ENCODE measurements at regions of chr12 and their contacts with region 1.

Region 1: DNA sequence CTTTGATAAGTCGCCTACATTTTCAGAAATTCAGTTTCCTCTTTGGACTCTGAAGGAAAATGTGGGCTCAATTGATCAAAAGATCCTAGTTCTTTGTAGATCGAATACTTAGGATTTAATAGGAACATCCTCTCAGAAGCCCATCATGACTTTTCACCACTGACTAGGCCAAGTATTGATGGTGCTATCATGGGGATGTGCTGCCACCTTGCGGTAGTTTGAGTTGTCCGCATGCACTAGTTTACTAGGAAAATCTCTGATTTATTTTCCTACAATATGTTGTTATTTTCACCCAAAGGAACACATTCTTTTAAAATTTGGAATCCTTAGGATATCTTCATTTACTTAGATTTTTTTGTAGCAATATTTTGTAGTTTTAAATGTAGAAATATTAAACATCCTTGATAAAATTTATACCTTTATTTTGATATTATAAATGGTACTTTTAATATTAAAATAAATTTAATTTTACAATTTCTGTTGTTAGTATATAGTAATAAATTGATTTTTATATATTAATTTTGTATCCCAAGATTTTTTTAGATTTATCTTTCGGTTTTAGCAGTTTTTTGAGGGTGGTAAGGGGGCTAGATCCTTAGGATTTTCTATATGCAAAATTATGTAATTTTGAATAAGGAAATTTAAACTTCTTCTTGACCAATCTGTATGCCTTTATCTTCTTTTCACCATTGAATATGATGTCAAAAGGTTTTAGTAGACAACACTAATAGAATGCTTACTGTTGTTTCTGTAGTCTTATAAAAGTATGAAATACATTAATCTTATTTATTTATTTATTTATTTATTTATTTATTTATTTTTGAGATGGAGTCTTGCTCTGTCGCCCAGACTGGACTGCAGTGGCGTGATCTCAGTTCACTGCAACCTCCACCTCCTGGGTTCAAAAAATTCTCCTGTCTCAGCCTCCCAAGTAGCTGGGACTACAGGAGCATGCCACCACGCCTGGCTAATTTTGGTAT is 52.9 kb upstream of the OR9K2 start:
- DNase-seq: peak; percentile 58 to 69 (median 65)
- ATAC-seq: peak in 3 of 4 donors; percentile 55 to 69 (median 64)
- H3K4me3 ChIP-seq: no peak overlapping the region
- H3K27ac ChIP-seq: no peak overlapping the region
- H3K4me1 ChIP-seq: no peaks in the 10 kb centered on the region
- H3K27me3 ChIP-seq: peaks cover 0 to 28% (median 0%) of the 10 kb centered on the region in 9 donors
- CTCF ChIP-seq: peak; percentile 67 to 93 (median 84)
- POLR2A ChIP-seq: no peak

Region 2: GRCh38 chr12:54701940-54702592 is 371.3 kb before region 1 on chr12:
- intact Hi-C with region 1: loop called in 3 of 10 experiments (anchors 5 to 10 kb)
- DNase-seq: no peak
- ATAC-seq: no peak
- H3K4me3 ChIP-seq: no peak overlapping the region
- H3K27ac ChIP-seq: no peak overlapping the region
- H3K4me1 ChIP-seq: no peaks in the 10 kb centered on the region
- H3K27me3 ChIP-seq: peaks cover 0 to 4% (median 0%) of the 10 kb centered on the region in 9 donors
- CTCF ChIP-seq: peak; percentile 36 to 71 (median 58)
- POLR2A ChIP-seq: no peak

Region 3: GRCh38 chr12:54749191-54749818 is 324.0 kb before region 1 on chr12:
- intact Hi-C with region 1: loop called in 5 of 10 experiments (anchors 5 to 10 kb)
- DNase-seq: no peak
- ATAC-seq: no peak
- H3K4me3 ChIP-seq: no peak overlapping the region
- H3K27ac ChIP-seq: no peak overlapping the region
- H3K4me1 ChIP-seq: peaks cover 0 to 12% (median 0%) of the 10 kb centered on the region in 12 donors
- H3K27me3 ChIP-seq: peaks cover 0 to 35% (median 0%) of the 10 kb centered on the region in 9 donors
- CTCF ChIP-seq: peak; percentile 58 to 83 (median 72)
- POLR2A ChIP-seq: no peak

Region 4: DNA sequence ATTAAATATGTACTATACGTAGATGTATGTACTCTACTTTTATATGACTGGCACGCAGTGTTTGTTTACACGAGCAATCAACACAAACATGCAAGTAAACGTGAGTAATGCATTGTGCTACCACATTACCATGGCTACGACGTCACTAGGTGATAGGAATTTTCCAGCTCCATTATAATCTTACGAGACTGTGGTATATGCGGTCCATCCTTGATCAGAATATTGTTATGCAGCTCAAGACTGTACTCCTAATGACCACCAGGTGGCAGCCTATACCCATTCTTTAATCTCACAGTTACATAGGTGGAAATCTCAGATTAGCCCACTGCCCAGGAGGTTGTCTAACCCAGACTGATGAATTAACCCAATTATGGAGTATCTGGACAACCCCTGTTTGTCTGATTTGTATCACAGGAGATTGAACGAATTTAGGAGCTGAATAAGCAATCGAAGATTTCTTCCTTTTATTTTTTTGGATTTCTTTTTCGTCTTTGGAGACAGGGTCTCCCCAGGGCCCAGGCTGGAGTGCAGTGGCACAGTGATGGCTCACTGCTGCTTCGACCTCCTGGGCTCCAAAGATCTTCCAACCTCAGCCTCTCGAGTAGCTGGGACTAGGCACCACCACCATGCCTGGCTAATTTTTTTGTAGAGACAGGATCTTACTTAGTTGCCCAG is 80.0 kb before region 1 on chr12:
- intact Hi-C with region 1: loop called (anchors 1 to 2 kb)
- DNase-seq: peak in 3 of 5 donors; percentile 31 to 42 (median 35)
- ATAC-seq: peak in 3 of 4 donors; percentile 60 to 80 (median 79)
- H3K4me3 ChIP-seq: no peak overlapping the region
- H3K27ac ChIP-seq: no peak overlapping the region
- H3K4me1 ChIP-seq: peaks cover 0 to 27% (median 2%) of the 10 kb centered on the region in 12 donors
- H3K27me3 ChIP-seq: peaks cover 0 to 9% (median 0%) of the 10 kb centered on the region in 9 donors
- CTCF ChIP-seq: peak; percentile 80 to 94 (median 89)
- POLR2A ChIP-seq: no peak

Region 5: DNA sequence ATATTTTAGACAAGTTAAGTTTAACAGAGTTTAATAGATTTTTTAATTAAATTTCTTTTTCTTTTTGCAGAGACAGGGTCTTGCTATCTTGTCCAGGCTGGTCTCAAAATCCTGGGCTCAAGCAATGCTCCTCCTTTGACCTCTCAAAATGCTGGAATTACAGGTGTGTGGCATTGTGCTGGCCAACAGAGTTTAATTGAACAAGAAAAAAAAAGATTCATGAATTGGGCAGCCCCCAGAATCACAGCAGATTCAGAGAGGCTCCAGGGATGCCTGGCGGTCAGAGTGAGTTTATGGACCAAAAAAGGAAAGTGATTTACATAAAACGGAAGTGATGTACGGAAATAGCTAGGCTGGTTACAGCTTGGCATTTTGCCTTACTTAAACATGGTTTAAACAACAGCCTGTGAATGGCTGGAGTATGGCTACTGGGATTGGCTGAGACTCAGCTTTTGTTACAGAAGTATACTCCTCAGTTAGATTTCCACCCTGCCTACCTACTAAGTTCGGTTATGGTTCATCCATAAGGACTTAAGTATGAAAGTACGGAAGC is 74.3 kb before region 1 on chr12:
- intact Hi-C with region 1: loop called in 3 of 10 experiments (anchors 2 kb)
- DNase-seq: no peak
- ATAC-seq: no peak
- H3K4me3 ChIP-seq: no peak overlapping the region
- H3K27ac ChIP-seq: no peak overlapping the region
- H3K4me1 ChIP-seq: peaks cover 0 to 3% (median 0%) of the 10 kb centered on the region in 12 donors
- H3K27me3 ChIP-seq: peaks cover 0 to 25% (median 0%) of the 10 kb centered on the region in 9 donors
- CTCF ChIP-seq: no peak
- POLR2A ChIP-seq: no peak

Measured in heart left ventricle (tissue), 16 donors.